ENCODE measurements at regions of chr1 and their contacts with region 1.

Region 1: DNA sequence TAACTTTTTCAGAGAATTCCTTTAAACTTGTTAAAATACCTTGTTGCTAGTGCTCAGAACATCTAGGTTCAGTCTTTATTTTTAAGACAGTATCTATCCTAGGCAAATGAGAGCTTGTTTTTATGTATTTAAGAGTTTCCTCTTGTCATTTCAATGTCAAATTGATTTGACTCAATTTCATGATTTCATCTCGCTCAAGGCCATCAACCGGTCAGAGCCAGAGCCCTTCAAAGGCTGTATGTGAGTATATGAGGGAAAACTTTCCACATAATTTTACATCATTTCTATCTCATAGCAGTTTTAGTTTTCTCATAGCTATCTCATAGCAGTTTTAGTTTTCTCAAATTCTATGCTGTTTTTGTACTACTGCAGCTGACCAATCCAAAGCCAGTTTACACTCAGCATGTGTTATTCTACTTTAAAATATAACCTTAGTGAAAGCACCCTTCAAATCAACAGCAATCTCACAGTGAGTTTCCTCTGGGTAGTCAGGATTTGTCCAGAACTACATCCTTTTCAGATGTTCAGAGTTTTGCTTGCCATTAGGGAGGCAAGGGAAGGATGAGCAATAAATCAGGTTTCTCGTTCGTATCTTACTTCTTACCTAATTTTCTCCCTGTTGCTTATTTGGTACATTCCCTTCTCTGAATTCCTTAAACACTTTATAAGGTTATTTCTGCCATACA is 12.7 kb downstream of the HNRNPU start:
- DNase-seq: no peak
- H3K4me3 Mint-ChIP-seq: no peak overlapping the region
- H3K27ac Mint-ChIP-seq: peak overlapping the region; percentile 76
- H3K4me1 Mint-ChIP-seq: peaks cover 74% of the 10 kb centered on the region
- H3K27me3 Mint-ChIP-seq: no peaks in the 10 kb centered on the region

Region 2: DNA sequence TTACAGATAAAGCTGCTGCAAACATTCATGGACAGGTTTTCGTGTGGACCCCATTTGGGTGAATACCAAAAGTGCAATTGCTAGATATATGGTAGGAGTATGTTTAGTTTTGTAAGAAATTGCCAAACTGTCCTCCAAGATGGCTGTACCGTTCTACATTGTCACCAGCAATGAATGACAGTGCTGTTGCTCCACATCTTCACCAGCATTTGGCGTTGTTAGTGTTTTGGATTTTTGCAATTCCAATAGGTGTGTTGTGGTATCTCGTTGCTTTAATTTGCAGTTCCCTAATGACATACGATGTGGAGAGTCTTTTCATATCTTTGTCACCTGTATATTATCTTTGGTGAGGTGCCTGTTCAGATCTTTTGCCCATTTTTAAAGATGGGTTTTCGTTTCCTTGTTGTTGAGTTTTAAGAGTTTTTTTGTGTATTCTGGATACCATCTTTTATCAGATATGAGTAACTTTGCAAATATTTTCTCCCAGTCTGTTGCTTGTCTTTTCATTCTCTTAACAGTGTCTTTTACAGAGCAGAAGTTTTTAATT is 378.6 kb before region 1 on chr1:
- CTCF ChIA-PET with region 1: no interaction called
- intact Hi-C with region 1: no loop called
- DNase-seq: no peak
- H3K4me3 Mint-ChIP-seq: no peak overlapping the region
- H3K27ac Mint-ChIP-seq: no peak overlapping the region
- H3K4me1 Mint-ChIP-seq: no peaks in the 10 kb centered on the region
- H3K27me3 Mint-ChIP-seq: no peaks in the 10 kb centered on the region

Region 3: DNA sequence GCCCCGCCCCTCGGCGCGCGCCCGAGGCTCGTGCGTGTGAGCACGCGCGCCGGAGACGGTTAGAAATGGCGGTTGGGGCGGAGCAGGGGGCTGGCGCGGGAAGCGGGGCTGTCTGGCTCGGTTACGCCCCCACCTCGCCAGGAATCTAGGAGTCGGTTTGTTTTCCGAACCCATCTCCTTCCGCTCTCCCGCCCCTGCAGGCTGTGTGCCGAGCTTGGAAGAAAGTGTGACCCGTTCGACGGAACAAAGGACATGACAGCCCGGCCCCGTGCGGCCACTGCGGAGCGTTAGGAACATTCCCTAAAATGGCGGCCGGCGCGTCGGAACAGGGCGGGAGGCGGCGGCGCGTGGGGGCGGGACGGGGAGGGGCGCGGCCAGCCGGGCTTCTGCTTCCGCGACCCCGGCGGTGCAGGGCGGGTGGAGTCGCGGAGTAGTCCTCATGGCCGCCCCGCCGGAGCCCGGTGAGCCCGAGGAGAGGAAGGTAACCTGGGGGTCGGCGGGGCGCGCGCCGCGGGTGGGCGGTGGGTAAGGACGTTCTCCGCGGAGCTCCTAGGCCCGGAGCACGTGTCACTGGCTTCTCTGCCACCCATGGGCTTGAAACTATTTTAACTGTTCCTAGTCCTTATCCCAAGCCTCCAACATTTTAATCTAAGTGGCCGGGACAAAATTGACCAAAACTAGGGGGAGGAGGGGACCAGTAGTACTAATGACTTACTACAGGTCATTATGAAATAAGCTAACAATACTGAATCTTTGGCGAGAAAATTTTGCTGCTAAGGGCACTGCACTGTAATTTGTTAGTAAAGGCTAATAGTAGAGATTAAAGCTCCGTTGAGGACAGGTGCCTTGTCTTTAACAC is 16.2 kb before region 1 on chr1 and contains the start of gene COX20:
- CTCF ChIA-PET with region 1: interaction called, 4 read pairs
- intact Hi-C with region 1: loop called (anchors 1 kb)
- DNase-seq: peak; percentile 85
- H3K4me3 Mint-ChIP-seq: peak within 1 kb of the TSS; percentile 94
- H3K27ac Mint-ChIP-seq: peak within 1 kb of the TSS; percentile 99
- H3K4me1 Mint-ChIP-seq: peaks cover 38% of the 10 kb centered on the region
- H3K27me3 Mint-ChIP-seq: no peaks in the 10 kb centered on the region
- total RNA-seq, gene COX20: 21.4 to 24.2 TPM